Activated naive CD4-positive, alpha-beta T cell treated with anti-CD3 and anti-CD28 coated beads, Interleukin-2, amount 10 ng/mL, durations not matched to agents 7 days and 5 days (primary cell): ENCODE measurements at regions of chr15 and their contacts with region 1.

Region 1: GRCh38 chr15:79380755-79381497 is 51.2 kb upstream of the MINAR1 start:
- DNase-seq: peak; percentile 84
- H3K4me3 Mint-ChIP-seq: no peak overlapping the region
- H3K27ac Mint-ChIP-seq: no peak overlapping the region
- H3K4me1 Mint-ChIP-seq: no peaks in the 10 kb centered on the region
- H3K27me3 Mint-ChIP-seq: no peaks in the 10 kb centered on the region

Region 2: DNA sequence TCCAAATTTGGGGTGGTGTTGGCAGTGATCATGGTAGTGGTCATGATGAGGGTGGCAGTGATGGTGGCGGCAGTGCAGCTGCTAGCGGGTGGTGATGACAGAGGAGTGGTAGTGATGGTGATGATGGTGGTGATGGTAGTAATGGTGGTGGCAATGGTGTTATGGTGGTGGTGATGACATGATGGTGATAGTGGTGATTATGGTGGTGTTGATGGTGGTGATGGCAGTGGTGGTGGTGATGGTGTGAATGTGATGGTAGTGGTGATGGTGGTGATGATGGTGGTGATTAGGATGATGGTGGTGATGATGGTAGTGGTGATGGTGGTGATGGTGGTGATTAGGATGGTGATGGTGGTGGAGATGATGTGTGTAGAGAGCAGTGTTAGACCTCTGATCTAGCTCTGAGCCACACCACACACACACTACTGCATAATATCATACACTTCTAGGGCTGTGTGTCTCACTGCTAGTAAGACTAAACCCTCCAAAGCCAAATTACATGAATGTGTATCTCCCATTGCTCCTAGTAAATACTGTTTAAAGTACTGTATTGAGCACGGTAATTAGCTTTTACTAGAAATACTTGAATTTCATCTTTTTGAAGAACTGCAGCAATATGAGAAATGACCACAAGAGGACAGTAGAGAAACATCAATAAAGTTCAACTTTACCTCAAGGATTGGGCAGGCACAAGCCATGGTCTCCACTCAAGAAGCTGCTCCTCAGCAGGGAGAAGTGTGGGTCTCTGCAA is 41.2 kb before region 1 on chr15:
- CTCF ChIA-PET with region 1: interaction called, 10 read pairs
- DNase-seq: peak; percentile 31
- H3K4me3 Mint-ChIP-seq: no peak overlapping the region
- H3K27ac Mint-ChIP-seq: no peak overlapping the region
- H3K4me1 Mint-ChIP-seq: no peaks in the 10 kb centered on the region
- H3K27me3 Mint-ChIP-seq: no peaks in the 10 kb centered on the region

Region 3: DNA sequence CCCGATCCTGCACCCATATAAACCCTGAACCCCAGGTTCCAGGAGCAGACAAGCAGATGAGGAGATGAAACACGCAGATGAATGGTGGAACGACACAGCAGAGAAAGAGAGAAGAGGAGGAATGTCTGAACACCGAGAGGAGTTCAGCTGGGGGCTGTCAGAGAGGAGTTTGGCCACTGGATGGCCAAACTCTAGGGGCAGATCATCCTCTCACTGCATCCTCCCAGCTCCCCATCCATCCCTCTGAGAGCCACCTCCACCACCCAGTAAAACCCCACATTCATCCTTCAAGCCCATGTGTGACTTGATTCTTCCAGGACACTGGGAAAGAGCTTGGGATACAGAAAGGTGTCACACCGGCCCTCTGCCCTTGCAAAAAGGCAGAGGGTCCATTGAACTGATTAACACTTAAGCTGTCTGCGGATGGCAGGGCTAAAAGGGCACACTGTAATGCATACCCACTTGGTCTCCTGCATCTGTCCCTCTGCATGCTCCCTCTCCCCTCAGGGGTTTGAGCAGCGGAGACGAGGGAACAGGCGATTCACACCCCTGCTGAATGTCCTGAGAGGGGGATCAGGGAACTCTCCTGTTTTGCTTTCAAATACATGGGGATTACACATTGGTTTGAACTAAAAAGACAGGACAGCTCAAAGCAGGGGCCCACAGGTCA is 16.2 kb before region 1 on chr15:
- CTCF ChIA-PET with region 1: interaction called, 23 read pairs
- DNase-seq: no peak
- H3K4me3 Mint-ChIP-seq: no peak overlapping the region
- H3K27ac Mint-ChIP-seq: no peak overlapping the region
- H3K4me1 Mint-ChIP-seq: no peaks in the 10 kb centered on the region
- H3K27me3 Mint-ChIP-seq: no peaks in the 10 kb centered on the region

Region 4: GRCh38 chr15:79394231-79394630 is 13.3 kb after region 1 on chr15:
- CTCF ChIA-PET with region 1: interaction called, 13 read pairs
- DNase-seq: no peak
- H3K4me3 Mint-ChIP-seq: no peak overlapping the region
- H3K27ac Mint-ChIP-seq: no peak overlapping the region
- H3K4me1 Mint-ChIP-seq: no peaks in the 10 kb centered on the region
- H3K27me3 Mint-ChIP-seq: peaks cover 4% of the 10 kb centered on the region

Region 5: DNA sequence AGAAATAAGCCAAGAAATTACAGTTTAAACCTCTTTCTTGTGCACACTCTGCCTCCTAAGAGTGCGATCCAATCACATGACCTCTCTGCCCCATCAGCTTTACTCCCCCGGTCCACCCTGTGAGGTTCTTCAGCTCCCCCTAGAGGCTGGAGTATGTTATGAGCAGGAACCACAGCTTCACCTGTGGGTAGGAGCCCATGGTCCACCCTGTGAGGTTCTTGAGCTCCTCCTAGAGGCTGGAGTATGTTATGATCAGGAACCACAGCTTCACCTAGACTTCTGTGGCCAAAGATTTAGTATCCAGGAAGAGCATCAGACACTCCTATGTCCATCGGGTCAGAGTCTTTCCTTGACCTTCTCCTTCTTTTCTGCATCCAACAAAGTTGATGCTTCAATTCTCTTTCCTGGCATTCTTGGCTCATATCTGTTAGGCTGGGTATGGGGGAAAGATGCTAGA is 215.2 kb after region 1 on chr15:
- CTCF ChIA-PET with region 1: interaction called, 170 read pairs
- DNase-seq: peak; percentile 72
- H3K4me3 Mint-ChIP-seq: no peak overlapping the region
- H3K27ac Mint-ChIP-seq: no peak overlapping the region
- H3K4me1 Mint-ChIP-seq: no peaks in the 10 kb centered on the region
- H3K27me3 Mint-ChIP-seq: peaks cover 10% of the 10 kb centered on the region

Region 6: DNA sequence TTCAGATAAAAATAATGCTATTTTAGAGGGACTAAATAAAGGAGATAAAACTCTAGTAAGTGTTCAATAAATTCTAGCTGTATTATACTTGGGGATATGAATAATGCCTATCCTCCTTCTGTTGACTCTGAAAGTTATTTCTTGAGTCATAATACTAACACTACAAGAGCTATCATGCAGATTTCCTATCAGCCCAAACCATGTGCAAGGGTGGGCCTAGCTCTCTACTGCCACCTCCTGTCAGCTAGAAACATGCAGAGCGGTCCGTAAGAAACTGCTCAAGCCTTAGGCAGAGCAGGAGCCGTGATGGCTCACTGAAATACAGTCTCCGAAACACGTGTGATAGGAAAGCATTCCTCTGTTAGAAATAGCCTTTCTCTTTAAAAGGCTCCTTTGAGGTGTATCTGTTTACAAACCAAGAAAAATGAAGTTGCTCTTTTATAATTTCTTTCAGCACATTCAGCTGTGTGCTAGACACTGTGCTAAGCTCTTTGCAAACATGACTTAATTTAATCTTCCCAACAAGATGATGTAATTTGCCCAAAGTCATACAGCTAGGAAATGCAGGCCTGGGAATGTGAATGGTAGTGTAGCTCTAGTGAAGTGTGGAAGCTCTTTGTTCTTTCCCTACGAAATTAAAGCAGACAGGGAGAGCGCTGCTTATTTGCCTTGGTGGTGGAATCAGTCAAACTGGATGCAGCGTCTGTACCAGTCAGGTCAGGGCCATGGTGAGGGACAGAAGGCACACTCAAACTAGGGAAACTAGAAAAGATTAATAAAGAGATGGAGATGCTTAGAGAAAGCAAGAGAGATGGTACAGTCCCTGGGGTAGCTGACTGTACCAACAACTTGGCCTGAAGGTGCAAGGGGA is 472.8 kb after region 1 on chr15:
- CTCF ChIA-PET with region 1: interaction called, 25 read pairs
- DNase-seq: peak; percentile 70
- H3K4me3 Mint-ChIP-seq: no peak overlapping the region
- H3K27ac Mint-ChIP-seq: no peak overlapping the region
- H3K4me1 Mint-ChIP-seq: peaks cover 12% of the 10 kb centered on the region
- H3K27me3 Mint-ChIP-seq: no peaks in the 10 kb centered on the region

Region 7: DNA sequence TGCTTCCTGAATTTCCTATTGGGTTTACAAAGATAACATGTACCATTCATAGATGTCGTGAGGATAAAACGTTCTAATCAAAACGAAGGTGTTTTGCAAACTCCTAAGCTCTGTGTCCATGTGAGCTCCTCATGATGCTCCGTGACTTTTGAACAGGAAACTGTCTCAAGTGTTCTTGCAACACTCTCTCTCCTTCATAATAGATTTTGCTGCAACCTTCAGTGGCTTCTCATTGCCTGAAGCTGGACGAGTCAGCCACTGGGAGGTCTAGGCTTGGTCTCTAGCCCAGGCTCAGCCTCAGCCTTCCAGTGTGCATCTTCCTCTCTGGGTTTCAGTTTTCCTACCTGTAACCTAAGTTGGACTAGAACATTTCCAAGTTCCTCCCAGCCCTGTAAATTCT is 608.8 kb after region 1 on chr15:
- CTCF ChIA-PET with region 1: interaction called, 11 read pairs
- DNase-seq: no peak
- H3K4me3 Mint-ChIP-seq: no peak overlapping the region
- H3K27ac Mint-ChIP-seq: no peak overlapping the region
- H3K4me1 Mint-ChIP-seq: peaks cover 3% of the 10 kb centered on the region
- H3K27me3 Mint-ChIP-seq: peaks cover 21% of the 10 kb centered on the region